Calu3 (cell line): ENCODE measurements at regions of chr4 and their contacts with region 1.

Region 1: DNA sequence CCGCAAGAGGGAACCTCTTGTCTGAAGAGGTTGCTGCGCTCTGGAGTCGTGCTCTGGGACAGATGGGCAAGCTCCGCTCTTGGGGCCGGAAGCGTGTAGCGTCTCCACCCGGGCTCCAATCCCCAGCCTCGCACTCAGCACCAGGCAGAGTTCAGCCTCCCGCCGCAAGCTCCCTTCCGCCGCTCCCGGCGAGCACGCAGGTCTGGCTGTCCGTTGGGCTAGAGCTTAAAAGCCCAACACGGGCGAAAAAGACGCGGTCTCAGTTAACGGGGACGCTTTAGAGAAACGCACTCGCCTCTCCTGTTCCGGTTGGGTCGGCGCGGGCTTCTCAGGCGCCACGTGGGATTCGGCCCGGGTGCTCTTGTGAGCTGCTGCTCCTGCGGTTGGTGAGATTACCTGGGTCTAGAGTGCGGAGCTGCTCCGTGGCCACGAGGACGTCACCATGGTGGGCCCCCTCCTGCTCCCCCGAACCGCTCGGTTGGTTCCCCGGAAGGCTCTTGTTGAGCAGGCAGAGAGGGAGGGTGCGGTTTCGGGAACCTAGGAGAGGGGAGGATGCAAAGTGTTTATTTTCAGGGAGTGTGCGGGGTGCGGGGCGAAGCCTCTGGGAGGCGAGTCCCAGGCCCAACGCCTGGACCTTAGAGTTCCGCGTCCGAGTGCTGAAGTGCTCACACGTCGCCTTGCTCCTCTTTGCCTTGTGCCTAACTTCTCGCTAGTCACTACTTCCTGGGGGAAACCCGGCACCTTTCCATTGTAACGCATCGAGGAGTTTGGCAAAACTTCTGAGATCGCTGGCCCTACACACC is at the start of gene TMA16:
- DNase-seq: peak; percentile 82
- H3K4me3 Mint-ChIP-seq: peak within 1 kb of the TSS; percentile 99
- H3K27ac Mint-ChIP-seq: peak within 1 kb of the TSS; percentile 99
- H3K4me1 Mint-ChIP-seq: peaks cover 15% of the 10 kb centered on the region
- H3K27me3 Mint-ChIP-seq: no peaks in the 10 kb centered on the region
- CTCF ChIP-seq: no peak
- total RNA-seq, gene TMA16: 34.5 and 44.1 TPM in 2 replicates

Region 2: DNA sequence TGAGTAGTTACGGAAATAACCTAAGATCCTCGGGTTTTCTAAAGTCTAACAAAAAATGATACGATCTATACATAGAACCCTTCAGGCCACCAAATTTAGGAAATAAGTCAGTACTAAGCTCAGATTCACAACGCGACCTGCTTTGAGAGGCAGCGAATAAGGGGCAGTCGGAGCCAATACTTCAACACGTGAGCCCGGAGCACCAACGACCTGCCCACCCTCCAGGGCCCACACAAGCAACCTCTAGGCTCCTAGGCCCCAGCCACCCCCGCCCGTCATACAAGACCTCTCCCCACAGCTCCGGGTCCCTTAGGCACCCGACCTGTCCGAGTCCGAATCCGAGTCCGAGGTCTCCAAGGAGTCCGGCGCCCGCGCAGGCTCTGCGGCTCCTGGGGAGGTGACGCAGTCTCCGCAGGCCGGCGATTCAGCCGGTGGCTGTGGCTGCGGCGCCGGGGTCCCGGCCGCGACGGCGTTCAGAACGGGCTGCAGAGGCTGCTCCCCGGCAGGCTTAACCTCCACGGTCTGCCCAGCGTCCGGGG is 328.5 kb before region 1 on chr4:
- CTCF ChIA-PET with region 1: no interaction called
- intact Hi-C with region 1: loop called (anchors 5 kb)
- DNase-seq: peak; percentile 51
- H3K4me3 Mint-ChIP-seq: peak overlapping the region; percentile 85
- H3K27ac Mint-ChIP-seq: peak overlapping the region; percentile 82
- H3K4me1 Mint-ChIP-seq: peaks cover 24% of the 10 kb centered on the region
- H3K27me3 Mint-ChIP-seq: no peaks in the 10 kb centered on the region
- CTCF ChIP-seq: no peak

Region 3: DNA sequence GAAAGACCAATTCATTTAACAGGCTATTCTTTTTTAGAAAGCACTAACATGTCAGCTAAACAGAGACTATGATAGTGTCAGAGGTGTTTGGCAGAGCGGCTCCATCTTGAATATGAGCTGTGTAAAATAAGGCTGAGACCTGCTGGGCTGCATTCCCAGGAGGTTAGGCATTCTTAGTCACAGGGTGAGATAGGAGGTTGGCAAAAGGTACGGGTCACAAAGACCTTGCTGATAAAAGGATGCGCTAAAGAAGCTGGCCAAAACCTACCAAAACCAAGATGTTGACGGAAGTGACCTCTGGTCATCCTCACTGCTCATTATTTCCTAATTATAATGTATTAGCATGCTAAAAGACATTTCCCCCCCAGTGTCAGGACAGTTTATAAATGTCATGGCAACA is 109.1 kb before region 1 on chr4:
- CTCF ChIA-PET with region 1: no interaction called
- intact Hi-C with region 1: loop called (anchors 2 kb)
- DNase-seq: peak; percentile 33
- H3K4me3 Mint-ChIP-seq: no peak overlapping the region
- H3K27ac Mint-ChIP-seq: peak overlapping the region; percentile 43
- H3K4me1 Mint-ChIP-seq: peaks cover 47% of the 10 kb centered on the region
- H3K27me3 Mint-ChIP-seq: no peaks in the 10 kb centered on the region
- CTCF ChIP-seq: no peak

Region 4: GRCh38 chr4:163404580-163404979 is 90.0 kb before region 1 on chr4:
- CTCF ChIA-PET with region 1: no interaction called
- intact Hi-C with region 1: loop called (anchors 5 kb)
- DNase-seq: peak; percentile 33
- H3K4me3 Mint-ChIP-seq: peak overlapping the region; percentile 46
- H3K27ac Mint-ChIP-seq: peak overlapping the region; percentile 87
- H3K4me1 Mint-ChIP-seq: no peaks in the 10 kb centered on the region
- H3K27me3 Mint-ChIP-seq: no peaks in the 10 kb centered on the region
- CTCF ChIP-seq: no peak